Motor neuron (in vitro differentiated cells): ENCODE measurements at regions of chr14 and their contacts with region 1.

Region 1: GRCh38 chr14:100900837-100901390 is 2.6 kb downstream of the RTL1 start:
- ATAC-seq: peak in 7 of 8 experiments; percentile 33 to 48 (median 42)
- H3K4me3 ChIP-seq: no peak overlapping the region
- H3K27ac ChIP-seq: no peak overlapping the region
- H3K4me1 ChIP-seq: peaks cover 54 to 87% of the 10 kb centered on the region in 2 donors

Region 2: DNA sequence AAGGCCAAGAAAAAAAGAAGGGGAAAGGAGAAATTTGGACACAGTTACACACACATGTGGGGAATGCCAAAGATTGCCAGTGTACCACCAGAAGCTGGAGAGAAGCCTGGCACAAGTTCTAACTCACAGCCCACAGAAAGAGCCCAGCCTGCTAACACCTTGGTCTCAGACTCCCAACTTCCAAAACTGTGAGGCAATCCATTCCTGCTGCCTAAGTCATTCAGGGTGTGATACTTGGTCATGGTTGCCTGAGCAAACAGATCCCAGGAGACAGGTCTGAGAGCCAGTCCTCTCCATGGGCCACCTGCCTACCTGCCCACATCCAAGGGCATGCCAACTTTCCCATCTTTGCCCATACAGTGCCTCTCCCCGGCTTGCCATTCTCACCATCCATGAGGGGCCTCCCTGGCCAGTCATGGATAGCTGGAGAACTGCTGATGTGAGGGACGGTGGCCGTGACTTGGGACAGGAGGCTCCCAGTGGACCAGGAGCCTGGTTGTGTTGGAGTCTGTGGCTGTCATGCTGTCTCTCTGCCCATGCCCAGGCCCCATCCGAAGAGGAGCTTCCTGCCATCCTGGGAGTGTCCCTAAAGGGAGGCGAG is 200.6 kb after region 1 on chr14:
- in situ Hi-C with region 1: no loop called
- ATAC-seq: no peak
- H3K4me3 ChIP-seq: no peak overlapping the region
- H3K27ac ChIP-seq: no peak overlapping the region
- H3K4me1 ChIP-seq: peaks cover 0 to 5% of the 10 kb centered on the region in 2 donors

Region 3: GRCh38 chr14:101113835-101114725 is 213.2 kb after region 1 on chr14:
- in situ Hi-C with region 1: no loop called
- ATAC-seq: no peak
- H3K4me3 ChIP-seq: no peak overlapping the region
- H3K27ac ChIP-seq: no peak overlapping the region
- H3K4me1 ChIP-seq: peaks cover 10% of the 10 kb centered on the region in 2 donors

Region 4: GRCh38 chr14:101400830-101401229 is 499.9 kb after region 1 on chr14:
- in situ Hi-C with region 1: no loop called
- ATAC-seq: peak in 2 of 8 experiments; percentile 27 to 45
- H3K4me3 ChIP-seq: no peak overlapping the region
- H3K27ac ChIP-seq: no peak overlapping the region
- H3K4me1 ChIP-seq: no peaks in the 10 kb centered on the region

Region 5: DNA sequence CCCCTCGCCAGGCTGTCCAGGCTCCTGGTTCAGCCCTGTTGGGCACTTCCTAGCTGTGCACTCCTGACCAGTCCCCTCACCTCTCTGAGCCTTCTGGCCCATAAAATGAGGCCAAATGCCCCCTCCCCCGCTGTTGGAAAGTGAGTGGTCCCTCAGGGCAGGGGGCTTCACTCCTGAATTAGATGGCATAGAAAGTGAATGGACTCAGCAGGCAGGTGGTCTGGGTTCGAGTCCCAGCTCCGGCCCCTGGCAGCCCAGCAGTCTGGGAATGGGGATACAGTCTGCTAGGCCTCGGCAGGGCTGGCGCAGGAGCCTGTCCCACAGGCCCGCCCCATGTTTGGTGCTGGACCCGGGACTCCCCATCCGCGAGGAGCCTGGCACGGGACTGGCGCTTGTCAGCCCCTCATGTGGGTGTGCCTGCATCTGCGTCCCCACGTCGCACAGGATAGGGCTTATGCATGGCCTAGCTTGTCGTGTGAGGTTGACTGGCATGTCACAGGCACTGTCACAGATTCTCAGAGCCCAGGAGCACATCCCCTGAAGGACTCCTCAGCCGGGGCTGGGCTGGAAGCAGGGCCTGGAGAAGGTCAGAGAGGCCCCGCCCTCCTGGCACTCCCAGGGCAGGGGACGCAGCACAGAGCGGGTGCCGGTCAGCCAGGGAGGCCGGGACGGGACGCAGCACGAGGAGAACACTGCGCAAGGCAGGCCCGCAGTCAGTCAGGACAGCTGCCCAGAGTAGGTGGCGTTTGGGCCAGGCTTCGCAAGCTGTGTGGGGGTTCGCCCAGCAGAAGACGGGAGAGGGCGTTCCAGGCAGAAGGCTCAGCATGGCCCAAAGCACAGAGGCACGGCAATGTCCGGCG is 700.9 kb after region 1 on chr14:
- in situ Hi-C with region 1: loop called in 1 of 9 experiments (anchors 25 kb)
- ATAC-seq: no peak
- H3K4me3 ChIP-seq: no peak overlapping the region
- H3K27ac ChIP-seq: no peak overlapping the region
- H3K4me1 ChIP-seq: no peaks in the 10 kb centered on the region